Psoas muscle (tissue), 8 donors: ENCODE measurements at regions of chr12 and their contacts with region 1.

Region 1: DNA sequence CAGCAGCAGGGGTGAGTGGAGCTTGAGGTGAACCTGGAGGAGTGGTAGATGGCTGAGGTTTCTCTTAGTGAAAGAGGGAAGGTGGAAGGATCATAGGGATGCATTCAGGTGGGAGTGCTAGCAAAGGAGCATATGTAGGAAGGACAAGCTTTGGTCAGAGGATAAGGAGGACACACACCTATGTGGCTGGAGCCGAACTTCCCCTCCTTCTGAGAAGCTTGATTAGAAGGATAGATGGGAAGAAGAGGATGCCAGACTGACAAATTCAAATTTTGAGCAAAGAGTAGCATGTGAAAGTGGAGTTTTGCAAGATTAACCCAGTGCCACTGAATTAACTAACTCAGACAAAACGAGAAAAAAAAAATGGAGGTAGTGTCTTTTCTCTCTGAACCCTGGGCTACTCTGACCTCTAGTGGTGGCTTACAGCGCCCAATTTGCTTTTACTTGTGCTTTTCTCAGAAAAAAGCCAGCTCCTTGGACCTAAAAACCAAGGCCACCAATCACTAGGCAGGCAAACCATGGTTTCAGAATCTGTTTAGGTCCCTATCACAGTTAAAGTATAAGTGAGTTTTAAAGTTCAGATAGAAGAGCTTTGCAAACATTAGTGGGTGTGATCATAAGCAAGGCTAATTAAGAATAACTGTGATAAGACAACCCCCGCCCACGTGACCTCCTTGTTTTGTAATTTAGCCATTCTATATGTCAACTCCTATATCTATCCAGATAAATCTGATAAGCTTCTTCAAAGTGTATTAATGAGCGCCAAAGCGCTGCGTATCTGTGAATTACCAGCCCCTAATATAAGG is 15.5 kb downstream of the EMP1 start:
- DNase-seq: no peak
- ATAC-seq: peak in 3 of 4 donors; percentile 40 to 76 (median 59)
- H3K4me3 ChIP-seq: no peak overlapping the region
- H3K27ac ChIP-seq: no peak overlapping the region
- H3K4me1 ChIP-seq: peaks cover 19% of the 10 kb centered on the region
- H3K27me3 ChIP-seq: no peaks in the 10 kb centered on the region
- CTCF ChIP-seq: peak; percentile 72

Region 2: GRCh38 chr12:12786716-12787601 is 425.1 kb before region 1 on chr12:
- intact Hi-C with region 1: loop called in 1 of 2 experiments (anchors 5 kb)
- DNase-seq: peak; percentile 81 to 92
- ATAC-seq: peak; percentile 95 to 97 (median 96)
- H3K4me3 ChIP-seq: peak overlapping the region; percentile 92
- H3K27ac ChIP-seq: peak overlapping the region; percentile 95
- H3K4me1 ChIP-seq: peaks cover 18% of the 10 kb centered on the region
- H3K27me3 ChIP-seq: no peaks in the 10 kb centered on the region
- CTCF ChIP-seq: no peak

Region 3: DNA sequence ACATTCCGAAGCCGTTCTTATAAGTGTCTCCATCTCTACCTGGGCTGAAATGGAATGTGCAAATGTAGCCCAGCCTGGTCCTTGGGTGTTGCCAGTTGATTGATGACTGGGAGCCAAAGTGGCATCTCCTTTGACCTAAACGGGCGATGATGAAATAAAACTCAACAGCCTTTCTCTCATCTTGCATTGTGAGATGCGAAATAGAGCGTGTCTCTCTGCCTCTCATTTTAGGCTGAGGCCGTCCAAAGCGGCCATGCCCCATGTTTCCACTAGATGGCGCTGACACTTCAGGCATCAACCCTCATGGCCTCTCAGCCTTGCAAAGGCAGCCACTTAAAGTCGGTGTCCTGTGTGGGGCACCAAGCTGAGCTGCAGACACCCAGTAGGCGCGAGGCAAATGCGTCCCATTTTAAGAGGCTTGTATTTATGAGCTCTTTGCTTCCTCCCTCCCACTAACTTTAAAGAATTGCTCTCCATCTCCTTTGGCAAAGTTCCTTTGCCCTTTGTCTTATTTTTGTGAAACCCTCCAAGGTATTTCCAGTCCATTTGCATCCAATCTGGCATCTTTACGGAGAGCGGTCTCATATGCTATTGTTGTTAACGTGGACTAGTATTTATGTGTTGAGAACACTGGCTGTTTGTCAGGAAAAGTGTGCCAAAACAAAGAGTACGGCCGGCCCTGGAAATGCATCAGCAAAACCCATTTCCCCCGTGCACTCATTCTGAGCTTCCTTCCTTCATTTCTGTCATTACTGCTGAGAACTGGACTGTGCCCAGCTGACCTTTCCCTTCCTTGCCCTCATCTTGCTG is 295.7 kb before region 1 on chr12:
- intact Hi-C with region 1: loop called (anchors 1 to 5 kb)
- DNase-seq: peak; percentile 81 to 89
- ATAC-seq: peak; percentile 88 to 97 (median 90)
- H3K4me3 ChIP-seq: peak overlapping the region; percentile 8
- H3K27ac ChIP-seq: peak overlapping the region; percentile 30
- H3K4me1 ChIP-seq: no peaks in the 10 kb centered on the region
- H3K27me3 ChIP-seq: no peaks in the 10 kb centered on the region
- CTCF ChIP-seq: peak; percentile 99

Region 4: DNA sequence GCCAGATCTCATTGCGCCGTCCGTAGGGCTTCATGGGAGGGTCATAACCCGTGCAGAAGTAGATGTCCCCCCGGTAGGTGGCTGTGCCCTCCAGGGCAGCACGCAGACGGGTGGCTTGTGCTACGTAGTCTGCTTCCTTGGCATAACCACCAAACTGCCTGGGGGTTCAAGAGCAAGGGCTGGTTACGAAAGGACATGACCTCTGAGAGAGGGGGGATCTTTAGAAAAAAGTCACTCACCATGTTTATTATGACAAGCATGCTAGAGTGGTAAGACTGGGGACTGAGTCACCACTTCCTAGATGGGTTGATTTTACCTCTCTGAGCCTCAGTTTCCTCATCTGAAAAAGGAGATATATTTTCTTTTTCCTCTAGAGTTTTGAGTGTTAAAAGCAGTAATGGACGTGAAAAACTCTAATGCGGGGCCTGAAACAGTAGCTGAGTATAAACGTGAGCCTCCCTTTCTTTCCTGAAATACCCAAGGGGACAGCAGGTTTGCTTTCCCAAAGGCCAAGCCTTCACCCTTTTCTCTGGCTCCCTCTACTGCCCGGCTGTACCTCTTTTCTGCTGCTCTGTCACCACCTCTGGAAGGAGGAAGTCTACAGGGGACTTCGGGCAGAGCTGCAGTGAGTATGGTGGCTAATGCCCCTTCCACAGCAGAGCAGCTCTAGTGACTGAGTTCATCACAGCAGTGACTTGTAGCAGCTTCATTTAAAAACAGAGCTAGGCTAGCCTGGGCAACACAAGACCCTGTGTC is 236.6 kb before region 1 on chr12:
- intact Hi-C with region 1: no loop called
- DNase-seq: no peak
- ATAC-seq: peak in 1 of 4 donors; percentile 27
- H3K4me3 ChIP-seq: no peak overlapping the region
- H3K27ac ChIP-seq: no peak overlapping the region
- H3K4me1 ChIP-seq: no peaks in the 10 kb centered on the region
- H3K27me3 ChIP-seq: no peaks in the 10 kb centered on the region
- CTCF ChIP-seq: no peak

Region 5: GRCh38 chr12:12999959-13000615 is 212.0 kb before region 1 on chr12 and contains the start of gene HEBP1:
- intact Hi-C with region 1: loop called in 1 of 2 experiments (anchors 5 kb)
- DNase-seq: peak; percentile 95 to 98
- ATAC-seq: peak; percentile 98 to 99 (median 98)
- H3K4me3 ChIP-seq: peak within 1 kb of the TSS; percentile 92
- H3K27ac ChIP-seq: peak within 1 kb of the TSS; percentile 86
- H3K4me1 ChIP-seq: peaks cover 15% of the 10 kb centered on the region
- H3K27me3 ChIP-seq: no peaks in the 10 kb centered on the region
- CTCF ChIP-seq: no peak
- total RNA-seq, gene HEBP1: 27.0 to 39.3 (median 35.5) TPM

Region 6: GRCh38 chr12:13023811-13024530 is 188.1 kb before region 1 on chr12:
- intact Hi-C with region 1: loop called in 1 of 2 experiments (anchors 10 kb)
- DNase-seq: no peak
- ATAC-seq: peak in 2 of 4 donors; percentile 61 to 66
- H3K4me3 ChIP-seq: no peak overlapping the region
- H3K27ac ChIP-seq: no peak overlapping the region
- H3K4me1 ChIP-seq: no peaks in the 10 kb centered on the region
- H3K27me3 ChIP-seq: no peaks in the 10 kb centered on the region
- CTCF ChIP-seq: no peak

Region 7: DNA sequence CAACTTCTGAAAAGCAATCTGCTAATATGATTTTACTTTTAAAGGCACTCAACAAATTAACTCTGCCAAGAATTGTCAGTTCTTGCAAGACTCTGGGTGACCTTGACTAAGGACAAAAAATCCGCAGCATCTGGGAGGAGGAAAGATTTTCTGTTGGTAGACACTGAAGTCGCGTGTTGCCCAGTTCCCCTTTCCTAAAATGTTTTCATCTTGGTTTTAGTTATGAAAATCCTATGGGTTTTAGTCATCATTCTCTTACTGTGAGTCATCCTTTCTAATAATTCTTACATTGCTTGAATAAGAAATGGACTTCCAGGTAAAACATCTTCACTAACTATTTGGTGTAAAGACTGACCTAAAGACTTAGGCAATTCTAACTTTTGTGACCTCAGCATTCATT is 117.7 kb before region 1 on chr12:
- intact Hi-C with region 1: loop called in 1 of 2 experiments (anchors 10 kb)
- DNase-seq: no peak
- ATAC-seq: no peak
- H3K4me3 ChIP-seq: no peak overlapping the region
- H3K27ac ChIP-seq: no peak overlapping the region
- H3K4me1 ChIP-seq: no peaks in the 10 kb centered on the region
- H3K27me3 ChIP-seq: no peaks in the 10 kb centered on the region
- CTCF ChIP-seq: no peak

Region 8: GRCh38 chr12:13100882-13101769 is 110.9 kb before region 1 on chr12:
- intact Hi-C with region 1: loop called (anchors 5 to 10 kb)
- DNase-seq: peak; percentile 95
- ATAC-seq: peak; percentile 80 to 88 (median 84)
- H3K4me3 ChIP-seq: peak overlapping the region; percentile 70
- H3K27ac ChIP-seq: peak overlapping the region; percentile 85
- H3K4me1 ChIP-seq: peaks cover 6% of the 10 kb centered on the region
- H3K27me3 ChIP-seq: no peaks in the 10 kb centered on the region
- CTCF ChIP-seq: no peak

Region 9: DNA sequence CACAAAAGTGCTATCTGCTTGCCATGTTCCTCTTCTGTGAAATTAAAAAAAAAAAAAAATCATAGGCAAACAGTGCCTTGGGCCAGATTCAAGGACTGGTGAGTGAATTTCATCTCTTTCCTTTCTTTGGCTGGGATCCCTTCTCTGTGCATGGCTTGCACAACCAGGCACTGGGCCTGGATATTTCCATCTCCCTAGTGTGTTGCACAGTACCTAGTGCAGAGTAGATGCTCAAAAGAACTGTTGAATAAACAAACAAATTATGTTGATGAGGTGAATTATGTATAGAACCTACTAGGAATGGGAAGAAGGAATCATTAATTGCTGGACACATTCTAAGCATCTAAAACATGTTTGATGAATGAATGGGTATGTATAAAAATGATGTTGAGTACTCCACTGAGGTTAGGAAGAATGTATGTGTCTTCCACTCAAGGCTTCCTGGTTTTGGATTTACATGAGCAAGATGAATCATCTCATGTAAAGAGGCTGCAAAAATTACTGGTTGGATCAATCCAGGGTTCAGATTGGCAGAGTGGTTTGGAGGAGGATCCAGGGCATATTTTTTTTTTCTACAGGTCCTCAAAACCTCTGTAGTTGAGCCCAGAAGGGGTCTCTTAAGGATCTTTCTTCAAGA is 77.7 kb after region 1 on chr12:
- intact Hi-C with region 1: no loop called
- DNase-seq: peak; percentile 39 to 61
- ATAC-seq: peak in 3 of 4 donors; percentile 55 to 78 (median 57)
- H3K4me3 ChIP-seq: no peak overlapping the region
- H3K27ac ChIP-seq: no peak overlapping the region
- H3K4me1 ChIP-seq: no peaks in the 10 kb centered on the region
- H3K27me3 ChIP-seq: no peaks in the 10 kb centered on the region
- CTCF ChIP-seq: no peak

Region 10: DNA sequence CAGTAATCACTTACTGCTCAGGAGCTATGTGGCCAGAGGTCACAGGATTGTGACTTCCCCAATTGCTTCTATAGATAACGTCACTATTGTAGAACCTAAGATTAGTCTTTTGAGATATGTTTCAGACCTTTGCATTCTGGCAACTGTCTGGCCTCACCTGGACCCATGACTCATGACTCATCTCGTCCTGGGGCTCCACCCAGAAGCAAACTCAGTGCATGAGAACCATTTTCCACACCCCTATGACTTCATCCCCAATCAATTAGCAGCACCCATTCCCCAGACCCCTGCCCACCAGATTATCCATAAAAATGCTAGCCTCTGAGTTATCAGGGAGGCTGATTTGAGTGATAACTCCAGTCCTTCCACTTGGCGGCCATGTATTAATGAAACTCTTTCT is 171.3 kb after region 1 on chr12:
- intact Hi-C with region 1: no loop called
- DNase-seq: no peak
- ATAC-seq: no peak
- H3K4me3 ChIP-seq: no peak overlapping the region
- H3K27ac ChIP-seq: no peak overlapping the region
- H3K4me1 ChIP-seq: no peaks in the 10 kb centered on the region
- H3K27me3 ChIP-seq: no peaks in the 10 kb centered on the region
- CTCF ChIP-seq: no peak